CD8-positive, alpha-beta T cell (primary cell): ENCODE measurements at regions of chr2 and their contacts with region 1.

Region 1: DNA sequence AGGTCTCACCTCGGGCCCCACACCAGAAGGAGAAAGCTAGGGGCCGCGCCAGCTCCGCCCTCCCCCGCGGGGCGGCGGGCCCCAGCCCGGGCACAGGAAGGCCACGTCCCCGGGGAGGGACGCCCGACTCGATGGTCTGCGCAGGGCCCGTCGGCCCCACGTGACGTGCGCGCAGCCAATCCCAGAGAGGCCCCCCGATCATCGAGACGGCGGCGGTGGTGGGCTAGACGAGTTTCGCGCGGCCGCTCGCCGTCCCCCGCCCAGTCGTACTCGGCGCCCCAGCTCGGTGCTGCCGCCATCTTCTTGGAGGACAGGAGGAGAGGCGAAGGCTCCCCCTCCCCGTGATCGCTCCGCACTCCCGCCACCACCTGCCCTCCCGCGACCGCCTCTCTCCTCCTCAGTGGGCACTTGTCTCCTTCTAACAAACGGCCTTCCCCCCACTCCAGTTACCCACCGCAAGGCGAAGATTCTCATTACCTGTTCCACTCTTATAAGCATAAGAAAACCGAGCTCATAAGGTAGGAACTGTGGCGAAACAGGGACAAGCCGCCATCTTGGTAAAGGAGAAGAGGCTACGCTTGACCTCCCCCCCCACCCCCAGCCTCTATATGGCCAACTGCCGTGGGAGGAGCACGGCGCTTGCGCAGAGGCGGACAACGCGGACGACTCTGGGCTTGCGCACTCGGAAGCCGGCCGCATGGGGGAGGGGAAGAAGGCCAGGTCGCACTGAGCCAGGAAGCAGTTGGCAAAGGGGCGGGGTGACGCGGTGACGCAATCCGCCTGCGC is at the start of gene HDLBP:
- DNase-seq: peak; percentile 100
- ATAC-seq: peak; percentile 73
- H3K4me3 ChIP-seq: peak within 1 kb of the TSS; percentile 91 to 92
- H3K4me3 Mint-ChIP-seq: peak within 1 kb of the TSS; percentile 98
- H3K27ac ChIP-seq: peak within 1 kb of the TSS; percentile 92 to 99
- H3K27ac Mint-ChIP-seq: peak within 1 kb of the TSS; percentile 99
- H3K4me1 ChIP-seq: peaks cover 69% of the 10 kb centered on the region
- H3K4me1 Mint-ChIP-seq: peaks cover 74% of the 10 kb centered on the region
- H3K27me3 ChIP-seq: no peaks in the 10 kb centered on the region
- H3K27me3 Mint-ChIP-seq: no peaks in the 10 kb centered on the region
- CTCF ChIP-seq: no peak
- total RNA-seq, gene HDLBP: 97.5 to 104 TPM

Region 2: GRCh38 chr2:240775905-240776304 is 539.4 kb before region 1 on chr2:
- CTCF ChIA-PET with region 1: no interaction called
- POLR2A ChIA-PET with region 1: no interaction called
- intact Hi-C with region 1: no loop called
- DNase-seq: no peak
- ATAC-seq: no peak
- H3K4me3 ChIP-seq: no peak overlapping the region
- H3K4me3 Mint-ChIP-seq: no peak overlapping the region
- H3K27ac ChIP-seq: no peak overlapping the region
- H3K27ac Mint-ChIP-seq: no peak overlapping the region
- H3K4me1 ChIP-seq: no peaks in the 10 kb centered on the region
- H3K4me1 Mint-ChIP-seq: no peaks in the 10 kb centered on the region
- H3K27me3 ChIP-seq: no peaks in the 10 kb centered on the region
- H3K27me3 Mint-ChIP-seq: no peaks in the 10 kb centered on the region
- CTCF ChIP-seq: no peak

Region 3: GRCh38 chr2:241102239-241102803 is 213.0 kb before region 1 on chr2 and contains the start of gene MTERF4:
- CTCF ChIA-PET with region 1: no interaction called
- POLR2A ChIA-PET with region 1: interaction called, 11 read pairs
- intact Hi-C with region 1: loop called (anchors 2 to 5 kb)
- DNase-seq: peak; percentile 74 to 95 (median 88)
- ATAC-seq: peak; percentile 85
- H3K4me3 ChIP-seq: peak within 1 kb of the TSS; percentile 74 to 83
- H3K4me3 Mint-ChIP-seq: peak within 1 kb of the TSS; percentile 95
- H3K27ac ChIP-seq: peak within 1 kb of the TSS; percentile 86 to 94
- H3K27ac Mint-ChIP-seq: peak within 1 kb of the TSS; percentile 98
- H3K4me1 ChIP-seq: peaks cover 71% of the 10 kb centered on the region
- H3K4me1 Mint-ChIP-seq: peaks cover 84% of the 10 kb centered on the region
- H3K27me3 ChIP-seq: no peaks in the 10 kb centered on the region
- H3K27me3 Mint-ChIP-seq: no peaks in the 10 kb centered on the region
- CTCF ChIP-seq: no peak
- total RNA-seq, gene MTERF4: 100.0 to 102 TPM

Region 4: GRCh38 chr2:241142593-241142992 is 172.7 kb before region 1 on chr2:
- CTCF ChIA-PET with region 1: no interaction called
- POLR2A ChIA-PET with region 1: no interaction called
- intact Hi-C with region 1: no loop called
- DNase-seq: no peak
- ATAC-seq: no peak
- H3K4me3 ChIP-seq: no peak overlapping the region
- H3K4me3 Mint-ChIP-seq: no peak overlapping the region
- H3K27ac ChIP-seq: no peak overlapping the region
- H3K27ac Mint-ChIP-seq: no peak overlapping the region
- H3K4me1 ChIP-seq: no peaks in the 10 kb centered on the region
- H3K4me1 Mint-ChIP-seq: peaks cover 9% of the 10 kb centered on the region
- H3K27me3 ChIP-seq: no peaks in the 10 kb centered on the region
- H3K27me3 Mint-ChIP-seq: no peaks in the 10 kb centered on the region
- CTCF ChIP-seq: no peak

Region 5: GRCh38 chr2:241271641-241272297 is 43.5 kb before region 1 on chr2:
- CTCF ChIA-PET with region 1: interaction called, 4 read pairs
- POLR2A ChIA-PET with region 1: interaction called, 4 read pairs
- intact Hi-C with region 1: loop called (anchors 1 kb)
- DNase-seq: peak; percentile 4 to 73 (median 64)
- ATAC-seq: peak; percentile 65
- H3K4me3 ChIP-seq: peak overlapping the region; percentile 44 to 66
- H3K4me3 Mint-ChIP-seq: peak overlapping the region; percentile 95
- H3K27ac ChIP-seq: peak overlapping the region; percentile 25 to 27
- H3K27ac Mint-ChIP-seq: peak overlapping the region; percentile 90
- H3K4me1 ChIP-seq: peaks cover 13% of the 10 kb centered on the region
- H3K4me1 Mint-ChIP-seq: peaks cover 52% of the 10 kb centered on the region
- H3K27me3 ChIP-seq: no peaks in the 10 kb centered on the region
- H3K27me3 Mint-ChIP-seq: no peaks in the 10 kb centered on the region
- CTCF ChIP-seq: no peak

Region 6: DNA sequence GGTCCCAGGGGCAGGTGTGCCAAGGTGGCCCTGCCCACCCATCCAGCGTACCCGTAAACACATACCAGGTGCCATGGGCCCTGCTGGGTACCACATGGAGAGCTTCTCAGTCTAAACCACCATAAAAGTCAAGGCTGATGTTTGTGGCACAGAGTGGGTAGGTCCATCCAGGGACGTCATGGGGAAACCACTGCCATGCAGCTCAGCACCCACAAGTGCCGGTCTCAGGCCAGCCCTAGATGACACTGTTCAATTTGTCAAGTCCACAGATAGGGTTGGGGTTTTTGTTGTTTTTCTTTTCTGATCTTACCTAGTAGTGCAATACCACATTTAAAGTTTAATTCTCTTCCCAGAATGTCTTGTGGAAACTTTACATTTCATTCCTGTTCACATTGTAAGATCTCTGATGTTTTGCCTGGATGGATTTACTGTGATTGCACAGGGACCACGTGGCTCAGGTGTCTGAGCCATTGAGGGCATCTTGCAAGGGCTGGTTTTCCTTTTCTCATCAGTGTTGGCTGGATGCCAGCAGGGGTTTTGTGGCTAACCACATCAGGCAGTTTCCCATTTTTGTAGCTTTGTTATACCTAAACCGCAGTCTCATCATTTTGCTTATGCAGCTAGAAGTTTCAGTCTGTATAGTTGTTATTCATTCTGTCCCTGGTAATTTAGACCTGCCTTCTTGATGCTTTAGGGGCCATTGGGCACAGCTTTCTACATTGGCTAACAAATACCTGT is 128.4 kb after region 1 on chr2:
- CTCF ChIA-PET with region 1: no interaction called
- POLR2A ChIA-PET with region 1: no interaction called
- intact Hi-C with region 1: loop called in 1 of 2 experiments (anchors 1 kb)
- DNase-seq: peak; percentile 82 to 97 (median 93)
- ATAC-seq: peak; percentile 78
- H3K4me3 ChIP-seq: no peak overlapping the region
- H3K4me3 Mint-ChIP-seq: no peak overlapping the region
- H3K27ac ChIP-seq: no peak overlapping the region
- H3K27ac Mint-ChIP-seq: peak overlapping the region; percentile 47
- H3K4me1 ChIP-seq: peaks cover 24% of the 10 kb centered on the region
- H3K4me1 Mint-ChIP-seq: peaks cover 16% of the 10 kb centered on the region
- H3K27me3 ChIP-seq: peaks cover 6 to 32% of the 10 kb centered on the region in 2 experiments
- H3K27me3 Mint-ChIP-seq: peaks cover 59% of the 10 kb centered on the region
- CTCF ChIP-seq: no peak

Region 7: DNA sequence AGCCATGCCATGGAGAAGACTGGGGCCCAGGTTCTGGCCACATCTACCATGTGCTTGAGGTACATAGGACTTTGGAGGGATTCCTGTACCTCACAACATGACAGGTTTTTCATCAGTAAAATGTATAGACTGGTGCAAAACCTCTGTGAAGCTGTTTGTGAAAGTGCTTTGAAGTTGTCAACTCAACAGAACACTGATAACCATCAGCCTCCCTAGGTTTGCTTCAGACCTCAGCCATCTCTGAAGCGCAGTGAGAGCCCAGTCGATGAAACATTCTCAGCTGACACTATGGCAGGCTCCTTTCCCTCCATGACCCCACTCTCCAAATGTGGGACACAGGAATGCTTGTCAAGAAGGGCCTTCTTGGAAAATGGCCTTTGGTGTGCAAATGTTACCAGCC is 154.5 kb after region 1 on chr2:
- CTCF ChIA-PET with region 1: no interaction called
- POLR2A ChIA-PET with region 1: no interaction called
- intact Hi-C with region 1: no loop called
- DNase-seq: no peak
- ATAC-seq: no peak
- H3K4me3 ChIP-seq: no peak overlapping the region
- H3K4me3 Mint-ChIP-seq: no peak overlapping the region
- H3K27ac ChIP-seq: no peak overlapping the region
- H3K27ac Mint-ChIP-seq: no peak overlapping the region
- H3K4me1 ChIP-seq: no peaks in the 10 kb centered on the region
- H3K4me1 Mint-ChIP-seq: no peaks in the 10 kb centered on the region
- H3K27me3 ChIP-seq: no peaks in the 10 kb centered on the region
- H3K27me3 Mint-ChIP-seq: peaks cover 16% of the 10 kb centered on the region
- CTCF ChIP-seq: no peak

Region 8: GRCh38 chr2:241637000-241637791 is 321.9 kb after region 1 on chr2 and contains the starts of genes ATG4B and THAP4:
- CTCF ChIA-PET with region 1: no interaction called
- POLR2A ChIA-PET with region 1: no interaction called
- intact Hi-C with region 1: loop called in 1 of 2 experiments (anchors 1 kb)
- DNase-seq: peak; percentile 46 to 88 (median 76)
- ATAC-seq: peak; percentile 71
- H3K4me3 ChIP-seq: peak within 1 kb of the TSS; percentile 83 to 95
- H3K4me3 Mint-ChIP-seq: peak within 1 kb of the TSS; percentile 89
- H3K27ac ChIP-seq: peak within 1 kb of the TSS; percentile 80 to 96
- H3K27ac Mint-ChIP-seq: peak within 1 kb of the TSS; percentile 92
- H3K4me1 ChIP-seq: peaks cover 37% of the 10 kb centered on the region
- H3K4me1 Mint-ChIP-seq: peaks cover 55% of the 10 kb centered on the region
- H3K27me3 ChIP-seq: no peaks in the 10 kb centered on the region
- H3K27me3 Mint-ChIP-seq: no peaks in the 10 kb centered on the region
- CTCF ChIP-seq: no peak
- total RNA-seq, gene ATG4B: 94.0 to 94.5 TPM
- total RNA-seq, gene THAP4: 19.5 to 24.3 TPM

Region 9: DNA sequence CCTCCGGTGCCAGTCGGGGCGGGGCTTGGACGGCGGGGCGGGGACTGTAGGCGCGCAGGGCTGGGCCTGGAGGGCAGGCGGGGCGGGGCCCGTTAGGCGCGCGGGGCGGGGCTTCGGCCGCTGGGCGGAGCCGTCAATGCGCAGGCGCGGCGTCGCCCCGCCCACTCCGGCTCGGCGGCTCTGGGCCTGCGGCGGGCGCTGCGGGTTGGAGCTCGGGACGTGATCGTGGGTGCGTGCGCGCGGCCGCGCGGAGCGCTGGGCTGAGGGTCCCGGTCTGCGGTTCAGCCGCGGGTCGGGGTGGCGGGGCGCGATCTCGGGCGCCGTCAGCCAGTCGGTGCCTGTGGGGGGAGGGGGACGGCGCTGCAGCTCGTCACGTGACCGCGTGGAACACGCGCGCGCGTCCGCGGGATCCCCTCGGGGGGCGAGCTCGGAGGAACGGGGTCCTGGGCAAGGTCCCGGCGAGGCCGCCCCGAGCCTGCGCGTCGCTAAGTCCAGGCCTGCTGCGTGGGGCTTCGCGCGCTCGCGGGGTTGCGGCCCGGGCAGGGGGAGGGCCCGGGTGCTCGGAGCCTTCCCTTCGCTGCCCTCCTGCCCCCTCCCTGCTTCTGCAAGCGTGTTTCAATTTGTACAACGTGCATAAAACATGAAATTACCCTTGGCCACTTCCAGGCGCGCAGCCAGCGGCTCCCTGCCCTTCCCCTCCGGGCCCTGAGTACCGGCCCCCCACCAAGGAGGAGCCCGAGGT is 419.4 kb after region 1 on chr2 and contains the start of gene D2HGDH:
- CTCF ChIA-PET with region 1: no interaction called
- POLR2A ChIA-PET with region 1: no interaction called
- intact Hi-C with region 1: loop called in 1 of 2 experiments (anchors 1 kb)
- DNase-seq: peak; percentile 84 to 97 (median 94)
- ATAC-seq: peak; percentile 92
- H3K4me3 ChIP-seq: peak within 1 kb of the TSS; percentile 68 to 70
- H3K4me3 Mint-ChIP-seq: peak within 1 kb of the TSS; percentile 86
- H3K27ac ChIP-seq: peak within 1 kb of the TSS; percentile 26 to 65
- H3K27ac Mint-ChIP-seq: peak within 1 kb of the TSS; percentile 85
- H3K4me1 ChIP-seq: peaks cover 22% of the 10 kb centered on the region
- H3K4me1 Mint-ChIP-seq: peaks cover 25% of the 10 kb centered on the region
- H3K27me3 ChIP-seq: no peaks in the 10 kb centered on the region
- H3K27me3 Mint-ChIP-seq: no peaks in the 10 kb centered on the region
- CTCF ChIP-seq: no peak
- total RNA-seq, gene D2HGDH: 41.6 to 46.4 TPM

Region 10: DNA sequence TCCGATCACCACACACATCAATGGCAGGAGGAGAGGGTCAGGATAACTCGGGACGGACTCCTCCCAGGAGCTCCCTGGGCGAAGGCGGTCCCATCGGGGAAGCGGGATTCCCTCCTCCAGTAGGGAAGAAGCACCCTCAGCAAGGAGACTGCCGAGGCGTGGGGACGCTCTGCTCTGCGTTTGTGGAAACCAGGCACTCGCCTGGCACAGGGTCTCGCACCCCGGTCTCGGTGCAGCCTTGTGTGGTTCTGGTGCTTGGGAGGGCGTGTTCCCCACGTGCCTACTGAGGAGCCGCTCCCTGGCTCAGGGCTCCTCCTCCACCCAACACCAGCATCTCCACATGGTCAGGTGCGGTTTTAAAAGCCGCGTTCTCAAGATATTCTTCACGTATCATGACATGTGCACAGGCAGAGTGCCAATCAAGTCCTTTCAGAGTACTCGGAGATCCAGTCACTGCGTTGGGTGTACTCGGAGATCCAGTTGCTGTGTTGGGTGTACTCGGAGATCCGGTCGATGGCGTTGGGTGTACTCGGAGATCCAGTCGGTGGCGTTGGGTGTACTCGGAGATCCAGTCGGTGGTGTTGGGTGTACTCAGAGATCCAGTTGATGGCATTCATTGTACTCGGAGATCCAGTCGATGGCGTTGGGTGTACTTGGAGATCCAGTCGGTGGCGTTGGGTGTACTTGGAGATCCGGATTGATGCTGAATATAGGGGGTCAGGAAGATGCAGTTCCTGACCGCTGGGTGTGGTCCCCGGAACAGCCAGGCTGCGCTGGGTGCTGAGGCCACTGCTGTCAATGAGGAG is 671.8 kb after region 1 on chr2:
- CTCF ChIA-PET with region 1: no interaction called
- POLR2A ChIA-PET with region 1: no interaction called
- intact Hi-C with region 1: no loop called
- DNase-seq: no peak
- ATAC-seq: no peak
- H3K4me3 ChIP-seq: no peak overlapping the region
- H3K4me3 Mint-ChIP-seq: no peak overlapping the region
- H3K27ac ChIP-seq: no peak overlapping the region
- H3K27ac Mint-ChIP-seq: no peak overlapping the region
- H3K4me1 ChIP-seq: peaks cover 15% of the 10 kb centered on the region
- H3K4me1 Mint-ChIP-seq: peaks cover 16% of the 10 kb centered on the region
- H3K27me3 ChIP-seq: no peaks in the 10 kb centered on the region
- H3K27me3 Mint-ChIP-seq: no peaks in the 10 kb centered on the region
- CTCF ChIP-seq: no peak